OCI-LY7 (cell line): ENCODE measurements at regions of chr17 and their contacts with region 1.

Region 1: GRCh38 chr17:75238684-75239191 is 22.7 kb downstream of the GGA3 start:
- DNase-seq: peak; percentile 89
- H3K4me3 ChIP-seq: no peak overlapping the region
- H3K27ac ChIP-seq: peak overlapping the region; percentile 15
- H3K4me1 ChIP-seq: peaks cover 27% of the 10 kb centered on the region
- CTCF ChIP-seq: peak; percentile 99

Region 2: GRCh38 chr17:75205037-75205792 is 33.5 kb before region 1 on chr17 and contains the start of gene NUP85:
- CTCF ChIA-PET with region 1: interaction called, 4 read pairs
- POLR2A ChIA-PET with region 1: interaction called, 5 read pairs
- intact Hi-C with region 1: loop called (anchors 5 kb)
- DNase-seq: peak; percentile 96
- H3K4me3 ChIP-seq: peak within 1 kb of the TSS; percentile 86
- H3K27ac ChIP-seq: peak within 1 kb of the TSS; percentile 72
- H3K4me1 ChIP-seq: peaks cover 19% of the 10 kb centered on the region
- CTCF ChIP-seq: no peak
- total RNA-seq, gene NUP85: 129 and 130 TPM in 2 replicates

Region 3: DNA sequence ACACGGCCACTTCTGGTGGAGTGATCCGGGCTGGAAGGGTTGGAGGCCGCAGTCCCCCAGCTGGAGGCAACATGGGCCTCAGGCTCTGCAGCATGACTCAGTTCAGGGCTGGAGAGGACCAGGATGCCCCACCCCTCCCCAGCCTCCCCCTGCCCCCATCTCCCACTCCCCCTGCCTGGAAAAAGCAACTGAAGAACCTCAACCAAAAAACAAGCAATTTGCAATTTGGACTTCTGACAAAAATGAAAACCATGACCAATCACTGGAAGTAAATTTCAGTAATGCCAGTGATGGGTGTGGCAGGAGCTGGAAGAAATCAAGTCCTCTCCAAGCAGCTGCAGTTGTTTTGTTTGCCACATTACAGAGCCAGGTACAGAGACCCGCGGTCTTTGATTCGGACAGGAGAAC is 38.9 kb after region 1 on chr17:
- CTCF ChIA-PET with region 1: no interaction called
- POLR2A ChIA-PET with region 1: no interaction called
- intact Hi-C with region 1: no loop called
- DNase-seq: no peak
- H3K4me3 ChIP-seq: no peak overlapping the region
- H3K27ac ChIP-seq: no peak overlapping the region
- H3K4me1 ChIP-seq: peaks cover 13% of the 10 kb centered on the region
- CTCF ChIP-seq: no peak